Activated B cell treated with CpG ODN at 0.5 μM for 24 hours (primary cell): ENCODE measurements at regions of chr5 and their contacts with region 1.

Region 1: GRCh38 chr5:102536323-102536928 is 37.6 kb upstream of the SLCO6A1 start:
- DNase-seq: no peak
- ATAC-seq: no peak
- H3K4me3 Mint-ChIP-seq: no peak overlapping the region
- H3K27ac Mint-ChIP-seq: no peak overlapping the region
- H3K4me1 Mint-ChIP-seq: peaks cover 2% of the 10 kb centered on the region
- H3K27me3 Mint-ChIP-seq: no peaks in the 10 kb centered on the region
- CTCF ChIP-seq: no peak

Region 2: DNA sequence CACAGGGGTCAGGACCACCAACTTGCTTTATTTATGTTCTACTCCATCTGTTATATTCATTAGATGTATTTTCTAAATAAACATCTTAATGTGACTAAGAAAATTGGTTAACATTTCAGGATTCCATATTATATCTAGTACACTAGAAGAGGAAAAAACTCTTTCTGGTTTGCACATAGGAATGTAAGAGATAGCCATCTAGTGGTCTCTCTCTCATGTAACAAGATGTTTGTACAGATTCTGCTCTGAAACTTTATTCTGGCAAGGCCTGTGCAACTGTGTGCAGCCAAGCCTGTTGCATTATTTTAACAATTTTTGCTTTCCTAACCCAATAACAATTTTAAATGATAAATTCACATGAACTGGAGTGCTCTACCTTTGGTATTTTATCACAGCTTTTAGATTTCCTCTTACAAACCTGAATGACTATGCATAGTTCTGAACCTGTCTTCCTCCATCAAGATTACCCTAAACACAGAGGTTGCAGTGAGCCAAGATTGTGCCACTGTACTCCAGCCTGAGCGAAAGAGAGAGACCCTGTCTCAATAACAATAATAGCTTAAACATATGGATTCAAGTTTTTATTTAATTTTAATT is 435.4 kb after region 1 on chr5:
- CTCF ChIA-PET with region 1: no interaction called
- POLR2A ChIA-PET with region 1: no interaction called
- intact Hi-C with region 1: loop called (anchors 2 kb)
- DNase-seq: no peak
- ATAC-seq: no peak
- H3K4me3 Mint-ChIP-seq: no peak overlapping the region
- H3K27ac Mint-ChIP-seq: no peak overlapping the region
- H3K4me1 Mint-ChIP-seq: no peaks in the 10 kb centered on the region
- H3K27me3 Mint-ChIP-seq: no peaks in the 10 kb centered on the region
- CTCF ChIP-seq: no peak

Region 3: DNA sequence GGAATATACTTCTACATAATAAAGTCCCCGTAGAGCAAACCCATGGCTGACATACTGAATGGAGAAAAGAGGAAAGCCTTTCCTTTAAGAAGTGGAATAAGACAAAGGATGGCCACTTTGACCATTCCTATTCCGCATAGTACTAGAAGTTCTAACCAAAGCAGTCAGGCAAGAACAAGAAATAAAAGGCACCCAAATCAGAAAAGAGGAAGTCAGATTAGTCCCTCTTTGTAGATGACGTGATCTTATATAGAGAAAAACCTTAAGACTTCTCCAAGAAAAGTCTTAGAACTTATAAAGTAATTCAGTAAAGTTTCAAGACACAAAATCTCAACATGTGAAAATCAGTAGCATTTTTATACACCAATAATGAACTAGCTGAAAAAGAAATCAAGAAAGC is 449.6 kb after region 1 on chr5:
- CTCF ChIA-PET with region 1: no interaction called
- POLR2A ChIA-PET with region 1: no interaction called
- intact Hi-C with region 1: no loop called
- DNase-seq: no peak
- ATAC-seq: no peak
- H3K4me3 Mint-ChIP-seq: no peak overlapping the region
- H3K27ac Mint-ChIP-seq: no peak overlapping the region
- H3K4me1 Mint-ChIP-seq: peaks cover 7% of the 10 kb centered on the region
- H3K27me3 Mint-ChIP-seq: no peaks in the 10 kb centered on the region
- CTCF ChIP-seq: no peak